ENCODE measurements at regions of chr6 and their contacts with region 1.

Region 1: DNA sequence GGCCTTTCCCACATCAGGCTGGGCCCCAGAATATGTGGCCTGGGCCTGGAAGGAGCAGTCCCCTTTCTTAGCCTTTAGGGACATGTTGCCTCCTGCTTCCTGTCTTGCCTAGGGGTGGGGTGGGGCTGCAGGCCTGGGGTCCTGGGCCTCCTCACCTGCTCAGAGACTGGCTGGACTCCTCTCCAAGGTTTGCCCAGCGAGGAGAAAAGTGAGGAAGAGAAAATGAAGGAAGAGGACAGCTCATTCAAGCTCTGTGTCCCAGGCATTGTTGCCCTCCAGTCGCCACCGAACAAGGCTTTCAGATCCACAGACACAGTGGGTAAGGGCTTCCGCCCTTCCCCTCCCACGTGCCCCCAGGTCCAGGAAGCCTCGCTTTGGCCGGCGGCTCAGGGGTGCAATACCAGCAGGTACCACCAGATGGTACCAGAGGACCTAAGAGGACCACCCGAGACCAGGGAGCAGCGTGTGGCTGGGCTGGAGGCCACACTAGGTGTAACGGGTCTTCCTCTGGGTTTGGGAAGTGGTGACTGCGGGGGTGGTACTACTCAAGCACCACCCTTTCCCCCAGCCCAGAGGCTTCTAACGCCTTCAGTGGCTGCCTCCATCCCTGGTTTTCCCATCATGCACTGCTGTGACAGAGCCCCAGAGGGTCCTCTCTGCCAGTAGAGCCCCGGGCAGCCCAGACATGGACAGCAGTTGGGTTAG is 5.5 kb upstream of the BAK1 start:
- DNase-seq: peak; percentile 90
- CTCF ChIP-seq: peak; percentile 97

Region 2: GRCh38 chr6:33126101-33126714 is 459.3 kb before region 1 on chr6:
- in situ Hi-C with region 1: no loop called
- DNase-seq: peak; percentile 69
- CTCF ChIP-seq: peak; percentile 58

Region 3: DNA sequence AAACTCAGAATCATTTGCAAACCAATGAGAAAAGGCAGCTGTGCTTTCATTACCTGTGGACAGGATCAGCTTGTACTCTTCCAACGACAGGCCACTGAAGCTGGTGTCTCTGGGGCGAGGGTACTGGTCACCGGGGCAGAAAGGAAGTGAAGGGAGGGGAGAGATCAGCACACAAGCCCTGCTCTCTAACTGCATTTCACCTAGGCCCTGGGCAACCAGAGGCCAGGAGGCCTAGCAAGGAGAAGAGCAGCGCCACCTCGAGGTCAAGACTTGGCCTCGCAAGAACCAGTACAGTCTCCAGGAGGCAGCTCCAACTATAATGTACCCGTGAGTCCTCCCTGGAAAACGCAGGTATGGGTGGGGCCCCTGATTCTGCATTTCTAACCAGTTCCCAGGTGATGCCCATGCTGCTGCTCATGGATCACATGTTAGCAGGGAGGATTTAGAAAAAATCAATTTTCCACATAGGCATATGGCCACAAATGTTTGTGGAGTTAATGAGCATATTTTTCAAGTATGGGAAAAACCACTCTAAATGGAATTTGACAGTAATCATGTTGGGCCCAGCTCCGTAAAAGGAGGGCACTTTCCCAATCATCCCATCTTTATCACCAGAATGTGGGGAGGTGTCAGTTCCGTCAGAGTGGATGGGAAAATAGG is 115.0 kb after region 1 on chr6:
- in situ Hi-C with region 1: loop called (anchors 5 kb)
- DNase-seq: peak; percentile 80
- CTCF ChIP-seq: peak; percentile 90

Region 4: DNA sequence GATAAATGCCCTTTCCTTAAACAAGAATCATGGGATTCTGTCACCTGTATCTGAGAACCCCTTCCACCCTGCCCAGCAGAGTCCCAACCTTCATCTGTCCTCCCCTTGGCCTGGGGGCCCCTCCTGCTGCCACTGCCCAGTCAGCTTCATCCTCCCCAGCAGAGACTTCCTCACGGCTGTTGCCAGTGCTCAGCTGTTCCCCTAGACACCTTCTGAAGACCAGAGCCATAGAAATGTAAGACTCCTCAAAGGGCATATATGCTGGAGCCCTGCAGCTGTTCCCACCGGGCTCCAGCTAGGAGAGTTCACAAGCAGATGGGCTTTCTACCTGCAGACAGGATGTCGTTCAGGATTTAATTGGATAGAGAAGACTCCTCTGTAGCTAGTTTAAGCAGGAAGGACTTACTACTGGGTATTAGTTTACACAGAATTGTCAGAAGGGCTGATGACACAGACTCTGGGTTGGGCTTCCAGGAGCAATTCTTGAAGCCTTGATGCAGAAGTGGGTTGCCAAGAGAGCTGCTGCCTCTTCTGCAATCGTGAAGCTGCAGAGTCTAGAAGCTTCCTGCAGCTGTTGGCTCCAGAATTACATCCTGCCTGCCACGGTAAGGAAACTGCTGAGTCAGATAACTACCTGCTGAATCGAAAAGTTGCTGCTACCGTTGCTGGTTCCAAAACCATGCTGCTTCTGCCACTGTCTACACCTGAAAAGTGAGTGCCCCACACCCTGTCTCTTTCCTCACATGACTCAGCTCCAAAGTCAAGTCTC is 275.3 kb after region 1 on chr6:
- in situ Hi-C with region 1: no loop called
- DNase-seq: no peak
- CTCF ChIP-seq: no peak